ENCODE measurements at regions of chr1 and their contacts with region 1.

Region 1: DNA sequence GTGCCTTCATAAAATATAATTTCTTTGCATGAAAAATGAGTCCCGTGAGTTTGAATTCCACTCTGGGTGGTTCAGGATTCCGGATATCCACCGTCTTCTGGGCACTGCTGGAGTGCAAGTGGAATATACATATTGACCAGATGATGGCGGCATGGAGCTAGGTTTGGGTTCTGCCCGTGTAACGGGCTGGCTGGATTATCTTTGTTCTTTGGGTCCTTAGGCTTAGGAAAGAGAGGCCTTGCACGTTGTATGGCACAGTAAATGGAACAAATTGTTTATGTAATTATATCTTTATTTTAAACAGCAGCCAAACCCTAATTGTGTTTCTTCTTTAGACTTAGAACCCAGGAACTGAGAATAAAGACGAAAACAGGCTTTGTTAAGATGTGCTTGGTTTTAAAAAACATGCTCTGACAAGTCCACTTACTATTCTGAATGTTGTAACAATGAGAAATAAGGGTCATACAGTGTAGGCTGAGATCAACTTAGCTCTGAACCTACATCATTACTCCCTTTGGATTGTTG is 13.5 kb upstream of the ACBD6 start:
- DNase-seq: peak; percentile 72
- ATAC-seq: peak; percentile 88
- H3K4me3 ChIP-seq: no peak overlapping the region
- H3K4me3 Mint-ChIP-seq: no peak overlapping the region
- H3K27ac ChIP-seq: no peak overlapping the region
- H3K27ac Mint-ChIP-seq: no peak overlapping the region
- H3K4me1 ChIP-seq: no peaks in the 10 kb centered on the region
- H3K4me1 Mint-ChIP-seq: peaks cover 2% of the 10 kb centered on the region
- H3K27me3 ChIP-seq: peaks cover 0 to 10% (median 0%) of the 10 kb centered on the region in 4 experiments
- H3K27me3 Mint-ChIP-seq: peaks cover 20% of the 10 kb centered on the region
- CTCF ChIP-seq: peak; percentile 94

Region 2: GRCh38 chr1:180502360-180503273 is 13.3 kb before region 1 on chr1 and contains the start of gene ACBD6:
- CTCF ChIA-PET with region 1: interaction called, 43 read pairs
- POLR2A ChIA-PET with region 1: no interaction called
- intact Hi-C with region 1: no loop called
- DNase-seq: peak; percentile 92
- ATAC-seq: peak; percentile 82
- H3K4me3 ChIP-seq: peak within 1 kb of the TSS; percentile 69 to 97 (median 84)
- H3K4me3 Mint-ChIP-seq: peak within 1 kb of the TSS; percentile 95
- H3K27ac ChIP-seq: peak within 1 kb of the TSS; percentile 74 to 87
- H3K27ac Mint-ChIP-seq: peak within 1 kb of the TSS; percentile 98
- H3K4me1 ChIP-seq: peaks cover 13 to 19% of the 10 kb centered on the region in 2 donors
- H3K4me1 Mint-ChIP-seq: peaks cover 32% of the 10 kb centered on the region
- H3K27me3 ChIP-seq: no peaks in the 10 kb centered on the region
- H3K27me3 Mint-ChIP-seq: no peaks in the 10 kb centered on the region
- CTCF ChIP-seq: no peak
- total RNA-seq, gene ACBD6: 80.9 and 82.8 TPM in 2 replicates

Region 3: DNA sequence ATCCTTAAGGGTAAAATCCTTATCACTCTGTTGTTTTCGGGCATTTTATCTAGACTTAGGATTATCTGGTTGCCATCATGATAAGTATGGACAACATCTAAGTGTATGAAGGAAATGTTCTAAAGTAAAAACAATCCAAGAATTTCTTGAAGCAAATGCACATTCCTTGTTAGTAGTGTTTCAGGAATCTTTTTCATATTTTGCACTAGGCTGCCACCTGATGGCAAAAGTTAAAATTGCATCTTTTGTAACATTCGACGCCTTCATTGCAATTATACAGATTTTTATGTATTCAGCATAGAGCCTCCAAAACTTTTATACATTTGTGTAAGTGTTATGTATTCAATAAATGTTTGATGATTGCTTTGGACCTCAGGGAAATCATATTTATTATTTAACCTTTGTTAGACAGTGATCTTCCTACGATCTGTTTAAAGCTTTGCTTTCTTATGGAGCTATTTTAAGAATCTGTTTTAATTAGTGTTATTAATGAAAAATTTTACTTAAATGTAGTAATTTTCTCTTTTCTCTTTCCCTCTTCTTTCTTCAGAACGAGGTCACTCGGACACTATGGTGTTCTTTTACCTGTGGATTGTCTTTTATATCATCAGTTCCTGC is 347.3 kb after region 1 on chr1:
- CTCF ChIA-PET with region 1: interaction called, 227 read pairs
- POLR2A ChIA-PET with region 1: no interaction called
- intact Hi-C with region 1: loop called (anchors 5 kb)
- DNase-seq: peak; percentile 64
- ATAC-seq: no peak
- H3K4me3 ChIP-seq: no peak overlapping the region
- H3K4me3 Mint-ChIP-seq: no peak overlapping the region
- H3K27ac ChIP-seq: no peak overlapping the region
- H3K27ac Mint-ChIP-seq: no peak overlapping the region
- H3K4me1 ChIP-seq: no peaks in the 10 kb centered on the region
- H3K4me1 Mint-ChIP-seq: no peaks in the 10 kb centered on the region
- H3K27me3 ChIP-seq: no peaks in the 10 kb centered on the region
- H3K27me3 Mint-ChIP-seq: no peaks in the 10 kb centered on the region
- CTCF ChIP-seq: peak; percentile 90

Region 4: GRCh38 chr1:181152892-181153633 is 637.1 kb after region 1 on chr1:
- CTCF ChIA-PET with region 1: interaction called, 4 read pairs
- POLR2A ChIA-PET with region 1: no interaction called
- intact Hi-C with region 1: loop called (anchors 5 kb)
- DNase-seq: peak; percentile 80
- ATAC-seq: peak; percentile 87
- H3K4me3 ChIP-seq: no peak overlapping the region
- H3K4me3 Mint-ChIP-seq: peak overlapping the region; percentile 54
- H3K27ac ChIP-seq: no peak overlapping the region
- H3K27ac Mint-ChIP-seq: peak overlapping the region; percentile 39
- H3K4me1 ChIP-seq: peaks cover 35 to 45% of the 10 kb centered on the region in 2 donors
- H3K4me1 Mint-ChIP-seq: peaks cover 49% of the 10 kb centered on the region
- H3K27me3 ChIP-seq: no peaks in the 10 kb centered on the region
- H3K27me3 Mint-ChIP-seq: no peaks in the 10 kb centered on the region
- CTCF ChIP-seq: peak; percentile 56

Region 5: DNA sequence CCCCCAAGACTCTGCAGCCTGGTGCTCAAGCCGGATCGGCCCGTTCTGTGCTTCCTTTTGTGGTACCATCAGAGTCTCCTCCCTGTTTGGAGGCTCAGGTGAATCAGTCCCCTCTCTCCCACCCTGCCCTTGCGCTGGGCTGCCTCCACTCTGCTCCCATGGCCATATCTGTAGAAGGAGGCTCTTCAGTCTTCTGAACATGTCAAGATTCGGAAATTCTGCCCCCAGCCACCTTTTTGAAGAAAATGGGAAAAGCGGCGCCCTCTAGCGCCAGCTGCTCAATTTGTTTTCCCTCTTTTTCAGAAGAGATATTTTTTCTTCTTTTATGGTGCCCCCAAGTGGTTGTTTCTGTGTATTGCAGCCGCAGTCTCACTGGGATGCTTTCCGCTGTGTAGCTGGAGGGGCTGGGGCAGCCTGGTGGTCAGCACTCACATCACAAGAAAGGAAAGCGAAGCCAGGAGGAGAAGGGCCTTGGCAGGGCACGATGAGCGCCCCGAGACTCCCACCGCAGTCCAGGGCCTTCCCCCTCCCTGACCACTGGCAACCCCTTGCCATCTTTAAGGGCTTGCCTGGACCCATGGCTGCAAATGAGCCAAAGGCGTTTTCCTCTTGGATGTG is 909.0 kb after region 1 on chr1:
- CTCF ChIA-PET with region 1: no interaction called
- POLR2A ChIA-PET with region 1: no interaction called
- intact Hi-C with region 1: loop called (anchors 5 kb)
- DNase-seq: peak; percentile 47
- ATAC-seq: peak; percentile 54
- H3K4me3 ChIP-seq: no peak overlapping the region
- H3K4me3 Mint-ChIP-seq: no peak overlapping the region
- H3K27ac ChIP-seq: no peak overlapping the region
- H3K27ac Mint-ChIP-seq: no peak overlapping the region
- H3K4me1 ChIP-seq: no peaks in the 10 kb centered on the region
- H3K4me1 Mint-ChIP-seq: peaks cover 3% of the 10 kb centered on the region
- H3K27me3 ChIP-seq: peaks cover 0 to 15% (median 3%) of the 10 kb centered on the region in 4 experiments
- H3K27me3 Mint-ChIP-seq: peaks cover 51% of the 10 kb centered on the region
- CTCF ChIP-seq: peak; percentile 78